AG04450 (cell line): ENCODE measurements at regions of chr15 and their contacts with region 1.

Region 1: GRCh38 chr15:64825431-64826294 is at the start of gene PIF1:
- DNase-seq: peak; percentile 94
- H3K4me3 ChIP-seq: peak within 1 kb of the TSS; percentile 68
- H3K27ac ChIP-seq: peak within 1 kb of the TSS; percentile 77
- H3K27me3 ChIP-seq: no peaks in the 10 kb centered on the region
- CTCF ChIP-seq: no peak
- polyA plus RNA-seq, gene PIF1: 5.6 and 6.2 TPM in 2 replicates

Region 2: DNA sequence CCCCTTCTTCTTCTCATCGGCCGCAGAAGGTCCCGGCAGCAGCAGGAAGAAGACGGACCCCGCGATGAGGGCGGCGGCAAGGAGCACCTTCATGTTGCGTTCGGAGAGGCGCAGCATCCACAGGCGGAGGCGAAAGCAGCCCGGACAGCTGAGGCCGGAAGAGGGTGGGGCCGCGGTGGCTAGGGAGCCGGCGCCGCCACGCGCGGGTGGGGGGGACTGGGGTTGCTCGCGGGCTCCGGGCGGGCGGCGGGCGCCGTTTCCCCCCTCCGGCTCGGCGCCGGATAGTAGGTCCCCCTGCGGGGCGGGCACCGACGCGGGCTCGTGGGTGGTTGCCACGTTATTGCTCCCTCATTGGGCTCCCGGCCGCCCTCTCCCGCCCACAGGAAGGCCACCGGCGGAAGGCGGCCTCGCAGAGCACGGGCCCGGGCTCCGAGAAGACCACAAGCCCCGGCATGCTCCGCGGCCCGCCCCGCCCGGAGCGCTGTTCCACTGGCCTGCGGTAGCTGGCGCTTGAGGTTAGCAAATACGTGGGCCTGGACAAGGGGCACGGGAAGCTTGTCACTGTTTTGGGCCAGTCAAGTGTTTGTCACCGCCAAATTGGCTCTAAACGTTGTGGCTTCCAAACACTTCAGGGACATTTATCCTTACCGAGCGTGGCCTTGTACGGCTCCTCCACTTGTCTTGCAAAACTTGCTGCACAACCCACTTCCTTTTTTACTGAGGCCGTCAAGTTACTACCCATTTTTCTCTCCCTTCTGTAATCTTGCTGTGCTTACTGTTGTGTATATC is 662.6 kb before region 1 on chr15 and contains the start of gene PPIB:
- CTCF ChIA-PET with region 1: no interaction called
- POLR2A ChIA-PET with region 1: interaction called, 10 read pairs
- DNase-seq: peak; percentile 95
- H3K4me3 ChIP-seq: peak within 1 kb of the TSS; percentile 96
- H3K27ac ChIP-seq: peak within 1 kb of the TSS; percentile 81
- H3K27me3 ChIP-seq: no peaks in the 10 kb centered on the region
- CTCF ChIP-seq: peak; percentile 41
- polyA plus RNA-seq, gene PPIB: 1,298 and 1,311 TPM in 2 replicates

Region 3: DNA sequence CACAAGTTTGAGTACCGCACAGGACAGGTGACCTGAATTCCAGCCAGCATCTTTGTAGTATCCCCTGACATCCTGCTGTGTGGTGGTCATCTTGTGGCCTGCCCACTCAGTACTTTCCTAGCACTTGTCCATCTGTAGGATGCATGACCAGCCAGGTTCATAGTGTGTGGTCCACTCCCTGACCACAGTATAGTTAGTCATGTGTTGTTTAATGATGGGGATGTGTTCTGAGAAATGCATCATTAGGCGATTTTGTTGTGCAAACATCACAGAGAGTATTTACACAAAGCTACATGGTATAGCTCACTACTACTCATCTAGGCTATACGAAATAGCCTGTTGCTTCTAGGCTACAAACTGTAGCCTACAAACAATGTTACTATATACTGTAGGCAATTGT is 33.4 kb before region 1 on chr15:
- CTCF ChIA-PET with region 1: no interaction called
- POLR2A ChIA-PET with region 1: interaction called, 11 read pairs
- DNase-seq: no peak
- H3K4me3 ChIP-seq: no peak overlapping the region
- H3K27ac ChIP-seq: no peak overlapping the region
- H3K27me3 ChIP-seq: no peaks in the 10 kb centered on the region
- CTCF ChIP-seq: no peak

Region 4: GRCh38 chr15:64836023-64836536 is 10.4 kb after region 1 on chr15:
- CTCF ChIA-PET with region 1: interaction called, 12 read pairs
- POLR2A ChIA-PET with region 1: interaction called, 9 read pairs
- DNase-seq: no peak
- H3K4me3 ChIP-seq: no peak overlapping the region
- H3K27ac ChIP-seq: no peak overlapping the region
- H3K27me3 ChIP-seq: no peaks in the 10 kb centered on the region
- CTCF ChIP-seq: no peak